ENCODE measurements at regions of chr20 and their contacts with region 1.

Region 1: DNA sequence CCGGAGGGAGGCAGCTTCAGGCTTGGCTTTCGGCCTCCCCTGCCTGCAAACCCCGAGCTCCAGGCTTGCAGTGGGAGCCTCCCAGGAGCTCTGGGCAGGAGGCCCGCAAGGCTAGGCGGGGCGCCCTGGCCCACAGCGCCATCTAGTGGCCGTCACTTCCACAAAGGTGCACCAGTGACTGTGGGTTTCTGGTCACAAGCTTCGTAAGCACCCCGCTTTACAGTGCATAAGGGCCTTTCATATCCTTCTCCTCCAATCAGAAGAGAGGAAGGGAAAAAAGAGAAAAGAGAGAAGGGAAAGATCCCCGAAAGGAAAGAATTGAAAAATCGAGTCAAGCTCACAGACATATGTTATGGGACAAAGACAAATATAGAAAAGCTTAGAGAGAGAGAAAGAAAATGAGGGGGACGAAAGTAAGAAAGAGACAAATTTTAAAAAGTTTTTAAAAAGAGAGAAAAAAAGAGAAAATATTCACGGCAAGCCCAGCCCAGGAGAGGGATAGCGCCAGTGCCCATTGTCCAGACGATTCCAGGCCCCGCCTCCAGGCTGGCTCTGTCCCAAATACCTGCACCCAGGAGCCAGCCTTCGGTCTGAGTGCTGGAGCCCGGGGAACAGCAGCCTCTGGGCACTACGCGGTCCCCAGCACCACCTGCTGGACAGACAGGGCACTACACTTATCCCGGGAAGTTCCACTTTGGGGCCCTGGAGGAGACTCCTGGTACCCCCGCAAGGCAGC is 207.1 kb downstream of the PREX1 start:
- DNase-seq: peak; percentile 95 to 96
- H3K4me3 ChIP-seq: peak overlapping the region; percentile 54
- H3K27ac ChIP-seq: peak overlapping the region; percentile 94
- H3K4me1 ChIP-seq: peaks cover 38% of the 10 kb centered on the region
- H3K27me3 ChIP-seq: no peaks in the 10 kb centered on the region
- CTCF ChIP-seq: peak; percentile 90

Region 2: DNA sequence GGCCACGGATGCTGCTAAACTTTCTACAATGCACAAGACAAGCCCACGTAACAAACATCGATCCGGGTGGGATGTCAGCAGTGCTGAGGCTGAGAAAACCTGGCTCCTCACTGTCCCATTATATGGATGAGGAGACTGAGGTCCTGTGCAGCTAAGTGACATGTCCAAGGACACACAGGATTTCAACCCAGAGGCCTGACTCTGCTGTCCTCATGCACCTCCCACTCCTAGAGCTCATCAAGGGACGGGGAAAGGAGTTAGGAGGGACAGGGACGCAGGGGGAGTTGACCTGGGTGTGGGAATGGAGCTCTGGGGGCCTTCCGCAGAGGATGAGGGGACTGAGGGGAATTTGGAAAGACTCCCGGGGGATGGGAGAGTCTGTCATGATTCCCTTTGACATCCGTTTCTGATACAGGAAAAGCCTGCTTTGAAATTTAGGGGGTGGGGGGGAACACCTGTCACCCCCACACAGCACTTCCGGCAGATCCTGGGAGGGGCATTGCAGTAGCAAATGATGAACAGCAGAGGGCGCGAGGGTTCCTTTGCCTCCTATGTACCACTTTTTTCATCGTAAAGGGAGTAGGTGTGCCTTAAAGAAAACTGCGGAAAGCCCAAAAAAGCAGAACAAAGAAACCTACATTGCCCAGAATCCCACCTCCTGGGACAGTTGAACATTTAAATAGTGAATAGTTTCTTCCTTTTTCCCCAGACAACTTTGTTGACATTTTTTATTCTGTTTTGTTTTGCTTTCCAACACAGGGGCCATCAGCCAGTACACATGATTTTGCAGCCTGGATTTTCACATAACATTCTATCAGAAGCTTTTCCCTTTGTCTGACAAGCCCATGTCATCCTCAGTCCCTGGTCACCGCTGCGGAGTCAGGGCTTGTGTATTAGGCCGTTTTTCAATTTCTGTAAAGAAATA is 1862.7 kb before region 1 on chr20:
- CTCF ChIA-PET with region 1: no interaction called
- POLR2A ChIA-PET with region 1: interaction called, 5 read pairs
- intact Hi-C with region 1: loop called (anchors 10 kb)
- DNase-seq: peak; percentile 55 to 63
- H3K4me3 ChIP-seq: no peak overlapping the region
- H3K27ac ChIP-seq: no peak overlapping the region
- H3K4me1 ChIP-seq: no peaks in the 10 kb centered on the region
- H3K27me3 ChIP-seq: no peaks in the 10 kb centered on the region
- CTCF ChIP-seq: peak; percentile 100

Region 3: DNA sequence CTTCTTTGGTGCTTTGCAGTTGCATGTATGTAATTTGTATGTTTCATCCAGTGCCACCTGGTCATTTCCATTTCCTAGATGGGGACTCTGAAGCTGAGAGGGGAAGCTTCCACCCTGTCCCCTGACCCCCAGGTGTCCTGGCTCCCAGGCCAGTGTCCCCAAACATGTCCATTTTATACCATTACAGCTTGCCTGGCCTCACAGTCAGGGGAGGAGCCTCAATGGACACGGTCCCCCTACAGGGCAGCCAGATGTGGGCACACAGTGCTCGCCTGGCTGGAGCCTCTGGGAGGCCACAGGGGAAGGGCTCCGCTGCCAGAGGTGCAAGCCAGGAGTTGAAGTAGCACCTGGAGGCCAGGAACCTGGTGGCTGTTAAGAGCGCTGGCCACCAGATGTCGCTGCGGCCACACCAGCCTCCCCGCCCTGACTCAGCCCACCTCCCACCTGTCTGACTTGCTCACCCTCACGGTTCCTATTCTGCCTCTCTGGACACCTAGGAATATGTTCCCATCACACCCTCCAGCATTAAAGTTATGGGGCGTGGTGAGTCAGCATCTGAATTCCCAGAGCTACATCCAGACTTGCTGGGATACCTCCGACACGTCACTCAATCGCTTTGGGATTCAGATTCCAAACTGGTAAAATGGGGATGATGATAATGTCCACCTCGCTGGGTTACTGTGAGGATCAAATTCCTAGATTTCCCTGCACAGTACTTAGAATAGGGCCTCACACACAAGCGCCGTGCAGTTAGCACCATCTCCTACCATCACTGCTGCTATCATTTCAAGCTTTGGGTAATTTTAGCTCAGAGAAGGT is 942.8 kb before region 1 on chr20:
- CTCF ChIA-PET with region 1: no interaction called
- POLR2A ChIA-PET with region 1: no interaction called
- intact Hi-C with region 1: loop called (anchors 1 kb)
- DNase-seq: peak in 1 of 2 experiments; percentile 77
- H3K4me3 ChIP-seq: no peak overlapping the region
- H3K27ac ChIP-seq: no peak overlapping the region
- H3K4me1 ChIP-seq: no peaks in the 10 kb centered on the region
- H3K27me3 ChIP-seq: no peaks in the 10 kb centered on the region
- CTCF ChIP-seq: peak; percentile 78

Region 4: GRCh38 chr20:47922252-47922651 is 698.4 kb before region 1 on chr20:
- CTCF ChIA-PET with region 1: no interaction called
- POLR2A ChIA-PET with region 1: interaction called, 11 read pairs
- intact Hi-C with region 1: no loop called
- DNase-seq: peak; percentile 49 to 92
- H3K4me3 ChIP-seq: peak overlapping the region; percentile 21; the same call in 1 of the 2 replicates
- H3K27ac ChIP-seq: peak overlapping the region; percentile 88
- H3K4me1 ChIP-seq: peaks cover 56% of the 10 kb centered on the region
- H3K27me3 ChIP-seq: no peaks in the 10 kb centered on the region
- CTCF ChIP-seq: no peak

Region 5: DNA sequence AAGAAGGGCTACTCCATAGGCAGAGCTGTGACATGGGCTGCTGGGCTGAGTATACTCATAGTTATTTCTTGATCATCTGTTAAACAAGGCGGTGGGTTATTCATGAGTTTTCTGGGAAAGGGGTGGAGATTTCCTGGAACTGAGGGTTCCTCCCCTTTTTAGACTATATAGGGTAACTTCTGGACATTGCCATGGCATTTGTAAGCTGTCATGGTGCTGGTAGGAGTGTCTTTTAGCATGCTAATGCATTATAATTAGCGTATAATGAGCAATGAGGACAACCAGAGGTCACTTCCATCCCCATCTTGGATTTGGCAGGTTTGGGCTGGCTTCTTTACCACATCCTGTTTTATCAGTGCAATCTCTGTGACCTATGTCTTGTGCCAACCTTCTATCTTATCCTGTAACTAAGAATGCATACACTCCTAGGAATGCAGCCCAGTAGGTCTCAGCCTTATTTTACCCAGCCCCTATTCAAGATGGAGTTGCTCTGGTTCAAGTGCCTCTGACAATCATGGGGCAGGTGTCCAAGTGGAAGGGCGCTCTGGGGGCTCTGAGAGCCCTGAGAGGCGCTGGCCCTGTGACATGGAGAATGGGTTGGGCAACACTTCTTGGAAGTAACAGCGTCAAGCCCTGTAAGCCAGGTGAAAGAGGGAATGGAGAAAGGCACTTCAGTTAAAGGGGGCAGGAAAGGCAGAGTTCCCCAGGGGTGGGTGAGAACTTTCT is 481.3 kb before region 1 on chr20:
- CTCF ChIA-PET with region 1: interaction called, 4 read pairs
- POLR2A ChIA-PET with region 1: no interaction called
- intact Hi-C with region 1: loop called (anchors 1 kb)
- DNase-seq: peak; percentile 79 to 88
- H3K4me3 ChIP-seq: no peak overlapping the region
- H3K27ac ChIP-seq: peak overlapping the region; percentile 45
- H3K4me1 ChIP-seq: peaks cover 23% of the 10 kb centered on the region
- H3K27me3 ChIP-seq: no peaks in the 10 kb centered on the region
- CTCF ChIP-seq: no peak

Region 6: DNA sequence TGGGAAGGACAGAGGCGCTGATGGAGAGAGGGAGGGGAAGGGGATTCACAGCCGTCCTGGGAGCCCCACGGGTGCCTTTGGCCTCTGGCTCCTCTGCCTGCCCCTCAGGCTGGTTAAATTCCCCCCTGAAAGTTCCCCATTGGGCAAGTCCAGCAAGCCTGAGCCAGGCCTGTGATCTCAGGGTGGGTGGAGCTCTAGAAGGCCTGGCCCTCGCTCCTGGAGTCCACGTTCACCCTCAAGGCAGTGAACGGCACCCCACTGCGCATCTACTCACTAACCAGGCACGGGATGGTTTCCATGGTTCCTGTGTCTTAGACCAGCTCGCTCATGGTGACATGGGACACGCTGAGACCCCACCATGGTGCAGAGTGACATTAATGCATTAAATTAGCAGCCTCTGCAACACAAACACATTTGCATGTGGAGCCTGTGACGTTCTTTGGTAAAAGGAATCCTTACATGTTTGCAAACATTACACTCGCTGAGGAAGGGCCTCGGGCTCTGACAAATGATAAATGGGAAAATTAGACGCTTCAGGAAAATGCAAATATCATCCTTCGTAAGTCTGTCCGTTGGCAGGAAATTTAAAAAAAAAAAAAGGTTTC is 245.6 kb before region 1 on chr20:
- CTCF ChIA-PET with region 1: interaction called, 6 read pairs
- POLR2A ChIA-PET with region 1: interaction called, 3 read pairs
- intact Hi-C with region 1: loop called (anchors 1 kb)
- DNase-seq: peak in 1 of 2 experiments; percentile 60
- H3K4me3 ChIP-seq: peak overlapping the region; percentile 57; the same call in 1 of the 2 replicates
- H3K27ac ChIP-seq: peak overlapping the region; percentile 99
- H3K4me1 ChIP-seq: peaks cover 45% of the 10 kb centered on the region
- H3K27me3 ChIP-seq: no peaks in the 10 kb centered on the region
- CTCF ChIP-seq: no peak

Region 7: DNA sequence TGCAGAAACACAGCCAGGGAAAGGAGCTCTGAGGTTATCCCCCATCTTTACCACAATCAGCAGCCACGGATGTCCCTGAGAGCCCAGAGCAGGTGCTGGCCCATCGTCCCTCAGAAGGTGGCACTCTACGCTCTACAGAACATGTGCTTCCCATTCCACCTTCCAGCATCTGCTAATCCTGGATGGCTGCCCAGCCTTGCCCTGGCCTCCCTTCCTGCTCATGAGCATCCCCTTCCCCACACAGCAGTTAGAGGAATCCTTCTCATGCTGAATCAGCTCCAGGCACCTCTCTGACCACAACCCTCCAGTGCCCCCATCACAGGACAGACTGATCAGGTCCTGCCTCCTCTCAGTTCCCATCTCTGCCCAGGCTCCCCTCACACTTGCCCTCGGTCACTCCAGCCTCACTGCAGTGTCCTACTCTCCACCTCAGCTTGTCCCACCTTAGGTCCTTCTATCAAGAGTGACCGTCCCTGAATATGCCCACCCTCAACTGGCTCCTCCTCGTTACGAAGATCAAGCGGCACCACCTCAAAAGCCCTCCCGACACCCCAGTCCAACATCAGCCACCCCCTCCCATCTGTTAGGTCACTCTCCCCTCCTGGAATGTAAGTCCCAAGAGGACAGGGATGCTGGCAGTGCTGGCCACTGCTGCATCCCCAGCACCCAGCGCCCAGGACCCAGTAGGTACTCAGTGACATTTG is 75.5 kb before region 1 on chr20:
- CTCF ChIA-PET with region 1: interaction called, 31 read pairs
- POLR2A ChIA-PET with region 1: no interaction called
- intact Hi-C with region 1: loop called (anchors 1 kb)
- DNase-seq: peak in 1 of 2 experiments; percentile 15
- H3K4me3 ChIP-seq: no peak overlapping the region
- H3K27ac ChIP-seq: no peak overlapping the region
- H3K4me1 ChIP-seq: peaks cover 16% of the 10 kb centered on the region
- H3K27me3 ChIP-seq: no peaks in the 10 kb centered on the region
- CTCF ChIP-seq: no peak

Region 8: GRCh38 chr20:48682529-48683251 is 62.0 kb after region 1 on chr20:
- CTCF ChIA-PET with region 1: no interaction called
- POLR2A ChIA-PET with region 1: no interaction called
- intact Hi-C with region 1: no loop called
- DNase-seq: peak; percentile 72 to 75
- H3K4me3 ChIP-seq: peak overlapping the region; percentile 16; the same call in 1 of the 2 replicates
- H3K27ac ChIP-seq: no peak overlapping the region
- H3K4me1 ChIP-seq: peaks cover 46% of the 10 kb centered on the region
- H3K27me3 ChIP-seq: no peaks in the 10 kb centered on the region
- CTCF ChIP-seq: no peak

Measured in PC-9 (cell line).